ENCODE measurements at regions of chr3 and their contacts with region 1.

Region 1: DNA sequence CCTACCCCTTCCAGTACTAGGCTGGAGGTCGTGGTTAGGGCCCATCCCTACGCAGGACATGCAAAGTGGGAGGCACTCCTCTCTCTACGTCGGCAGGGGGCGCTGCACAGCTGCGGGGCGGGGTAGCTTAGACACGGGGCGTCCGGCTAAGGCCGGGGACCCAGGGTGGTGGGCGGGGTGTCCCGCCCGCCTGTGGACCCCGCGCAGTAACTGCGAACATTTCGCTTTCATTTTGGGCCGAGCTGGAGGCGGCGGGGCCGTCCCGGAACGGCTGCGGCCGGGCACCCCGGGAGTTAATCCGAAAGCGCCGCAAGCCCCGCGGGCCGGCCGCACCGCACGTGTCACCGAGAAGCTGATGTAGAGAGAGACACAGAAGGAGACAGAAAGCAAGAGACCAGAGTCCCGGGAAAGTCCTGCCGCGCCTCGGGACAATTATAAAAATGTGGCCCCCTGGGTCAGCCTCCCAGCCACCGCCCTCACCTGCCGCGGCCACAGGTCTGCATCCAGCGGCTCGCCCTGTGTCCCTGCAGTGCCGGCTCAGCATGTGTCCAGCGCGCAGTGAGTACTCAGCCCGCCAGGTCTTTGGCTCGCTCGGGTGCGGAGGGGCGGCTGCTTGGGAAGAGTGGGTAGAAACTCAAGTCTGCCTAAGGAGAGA is at the start of gene IL12A:
- DNase-seq: peak; percentile 76
- H3K4me3 Mint-ChIP-seq: peak within 1 kb of the TSS; percentile 81
- H3K27ac Mint-ChIP-seq: peak within 1 kb of the TSS; percentile 27
- H3K4me1 Mint-ChIP-seq: peaks cover 24% of the 10 kb centered on the region
- H3K27me3 Mint-ChIP-seq: peaks cover 24% of the 10 kb centered on the region
- total RNA-seq, gene IL12A: 0.34 and 0.37 TPM in 2 replicates

Region 2: DNA sequence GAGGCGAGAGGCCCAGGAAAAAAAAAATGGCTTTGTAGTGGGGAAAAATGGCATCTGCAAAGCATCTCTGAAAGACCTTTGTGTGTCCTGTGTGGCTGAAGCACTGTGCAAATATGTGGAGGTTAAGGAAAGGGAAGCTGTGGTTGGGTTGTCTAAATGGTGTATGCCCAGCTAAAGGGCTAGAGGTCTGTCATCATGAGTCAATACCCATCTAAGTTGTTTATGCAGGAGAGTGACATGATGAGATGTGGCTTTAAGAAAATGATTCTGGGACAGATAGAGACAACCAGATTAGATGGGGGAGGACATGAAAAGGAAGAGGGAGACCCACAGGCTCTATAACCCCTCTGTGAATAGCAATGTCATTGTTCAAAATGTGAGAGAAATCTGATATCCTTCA is 906.2 kb before region 1 on chr3:
- intact Hi-C with region 1: no loop called
- DNase-seq: no peak
- H3K4me3 Mint-ChIP-seq: no peak overlapping the region
- H3K27ac Mint-ChIP-seq: no peak overlapping the region
- H3K4me1 Mint-ChIP-seq: no peaks in the 10 kb centered on the region
- H3K27me3 Mint-ChIP-seq: no peaks in the 10 kb centered on the region

Region 3: DNA sequence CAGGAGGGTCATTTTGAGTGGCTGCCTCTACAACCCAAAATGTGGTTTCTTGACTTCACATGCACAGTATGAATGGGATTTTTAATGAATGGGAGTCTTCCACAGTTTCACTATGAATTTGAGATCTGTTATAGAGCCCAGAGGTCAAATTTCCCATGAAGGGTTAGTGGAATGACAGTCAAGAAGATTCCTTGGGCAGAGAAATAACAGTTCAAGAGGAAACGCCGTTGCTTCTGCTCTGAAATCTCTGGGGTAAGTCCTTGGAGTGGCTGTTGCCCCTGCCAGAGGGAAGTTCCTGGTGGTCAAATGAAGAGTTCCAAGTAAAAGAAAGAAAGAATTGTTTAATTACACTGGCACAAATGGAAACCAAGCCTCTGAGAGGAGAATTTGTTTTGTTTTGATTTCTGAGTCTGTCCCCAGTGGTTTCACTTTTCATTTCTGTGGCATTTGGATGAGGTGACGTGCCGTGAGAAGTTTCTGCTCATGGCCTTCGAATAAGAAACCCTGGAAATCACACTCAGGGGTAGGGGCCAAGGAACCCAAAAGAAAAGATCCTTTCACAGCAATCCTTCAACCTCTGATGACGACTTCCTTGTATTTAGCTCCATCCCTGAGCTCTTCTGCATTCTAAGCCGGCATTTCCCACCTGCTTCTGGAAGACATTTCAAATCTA is 77.6 kb before region 1 on chr3:
- intact Hi-C with region 1: loop called (anchors 5 kb)
- DNase-seq: no peak
- H3K4me3 Mint-ChIP-seq: peak overlapping the region; percentile 47
- H3K27ac Mint-ChIP-seq: no peak overlapping the region
- H3K4me1 Mint-ChIP-seq: peaks cover 13% of the 10 kb centered on the region
- H3K27me3 Mint-ChIP-seq: peaks cover 11% of the 10 kb centered on the region

Region 4: GRCh38 chr3:160027541-160028195 is 38.9 kb after region 1 on chr3:
- intact Hi-C with region 1: loop called (anchors 1 kb)
- DNase-seq: peak; percentile 21
- H3K4me3 Mint-ChIP-seq: peak overlapping the region; percentile 25
- H3K27ac Mint-ChIP-seq: peak overlapping the region; percentile 92
- H3K4me1 Mint-ChIP-seq: peaks cover 39% of the 10 kb centered on the region
- H3K27me3 Mint-ChIP-seq: no peaks in the 10 kb centered on the region

Region 5: DNA sequence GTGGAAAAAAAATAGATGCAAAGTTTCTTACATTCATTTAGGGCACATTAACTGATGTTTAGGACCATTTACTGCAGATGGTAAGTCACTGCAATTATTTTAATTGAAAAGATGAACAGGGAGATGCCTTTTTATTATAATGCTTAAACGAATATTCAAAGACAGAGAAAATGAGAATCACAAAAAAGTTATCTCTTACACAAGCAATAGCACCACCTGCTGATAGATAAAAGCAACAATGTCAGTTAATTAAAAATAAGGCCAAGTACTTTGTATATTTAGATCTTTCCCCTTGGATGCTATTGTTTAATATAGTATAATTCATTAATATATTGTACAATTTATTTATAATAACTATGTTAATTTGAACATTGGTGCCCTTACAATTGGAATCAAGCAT is 354.4 kb after region 1 on chr3:
- intact Hi-C with region 1: loop called (anchors 5 kb)
- DNase-seq: no peak
- H3K4me3 Mint-ChIP-seq: no peak overlapping the region
- H3K27ac Mint-ChIP-seq: no peak overlapping the region
- H3K4me1 Mint-ChIP-seq: no peaks in the 10 kb centered on the region
- H3K27me3 Mint-ChIP-seq: no peaks in the 10 kb centered on the region

Region 6: GRCh38 chr3:160413613-160414248 is 425.0 kb after region 1 on chr3:
- intact Hi-C with region 1: loop called (anchors 1 kb)
- DNase-seq: peak; percentile 58
- H3K4me3 Mint-ChIP-seq: no peak overlapping the region
- H3K27ac Mint-ChIP-seq: no peak overlapping the region
- H3K4me1 Mint-ChIP-seq: peaks cover 49% of the 10 kb centered on the region
- H3K27me3 Mint-ChIP-seq: no peaks in the 10 kb centered on the region

Region 7: DNA sequence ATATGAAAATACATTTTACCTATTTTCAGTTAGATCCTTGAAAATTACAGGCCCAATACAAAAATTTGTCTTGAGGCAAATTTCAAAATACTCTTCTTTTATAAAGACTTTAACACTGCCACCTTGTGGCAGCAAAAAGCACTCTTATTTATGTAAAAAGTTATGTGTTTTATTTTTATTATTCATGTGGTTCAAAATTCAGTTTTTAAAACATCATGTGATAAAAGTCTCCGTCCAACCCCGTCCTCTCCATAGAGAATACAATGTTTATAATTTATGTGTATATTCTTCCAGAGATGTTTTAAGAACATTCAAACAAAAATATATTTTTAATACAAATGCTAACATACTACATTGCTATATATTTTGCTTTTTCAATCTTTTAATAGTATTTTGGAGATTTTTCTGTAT is 497.7 kb after region 1 on chr3:
- intact Hi-C with region 1: loop called (anchors 1 kb)
- DNase-seq: no peak
- H3K4me3 Mint-ChIP-seq: peak overlapping the region; percentile 78
- H3K27ac Mint-ChIP-seq: no peak overlapping the region
- H3K4me1 Mint-ChIP-seq: peaks cover 5% of the 10 kb centered on the region
- H3K27me3 Mint-ChIP-seq: peaks cover 2% of the 10 kb centered on the region

Region 8: GRCh38 chr3:160754855-160755747 is 766.4 kb after region 1 on chr3:
- intact Hi-C with region 1: loop called (anchors 1 kb)
- DNase-seq: peak; percentile 84
- H3K4me3 Mint-ChIP-seq: peak overlapping the region; percentile 93
- H3K27ac Mint-ChIP-seq: peak overlapping the region; percentile 98
- H3K4me1 Mint-ChIP-seq: peaks cover 37% of the 10 kb centered on the region
- H3K27me3 Mint-ChIP-seq: peaks cover 40% of the 10 kb centered on the region

Measured in activated T-helper 1 cell treated with anti-CD3 and anti-CD28 coated beads, Interleukin-12 subunit alpha, Interleukin-12 subunit beta, Interleukin-2, Interleukin-4 antibody, amounts not matched to agents 30 ng/mL and 10 ng/mL and 1 ng/mL, durations not matched to agents 14 hours and 24 hours and 36 hours (primary cell).